CD8-positive, alpha-beta T cell (primary cell): ENCODE measurements at regions of chr12 and their contacts with region 1.

Region 1: GRCh38 chr12:67943226-67943892 is 45.9 kb upstream of the IFNG-AS1 start:
- DNase-seq: peak; percentile 30 to 80 (median 69)
- ATAC-seq: peak; percentile 78
- H3K4me3 ChIP-seq: no peak overlapping the region
- H3K4me3 Mint-ChIP-seq: no peak overlapping the region
- H3K27ac ChIP-seq: no peak overlapping the region
- H3K27ac Mint-ChIP-seq: no peak overlapping the region
- H3K4me1 ChIP-seq: no peaks in the 10 kb centered on the region
- H3K4me1 Mint-ChIP-seq: peaks cover 7% of the 10 kb centered on the region
- H3K27me3 ChIP-seq: no peaks in the 10 kb centered on the region
- H3K27me3 Mint-ChIP-seq: peaks cover 6% of the 10 kb centered on the region
- CTCF ChIP-seq: peak; percentile 83

Region 2: GRCh38 chr12:67025543-67026114 is 917.7 kb before region 1 on chr12:
- CTCF ChIA-PET with region 1: interaction called, 3 read pairs
- POLR2A ChIA-PET with region 1: no interaction called
- intact Hi-C with region 1: loop called in 1 of 2 experiments (anchors 10 kb)
- DNase-seq: peak in 8 of 9 experiments; percentile 9 to 61 (median 43)
- ATAC-seq: peak; percentile 52
- H3K4me3 ChIP-seq: no peak overlapping the region
- H3K4me3 Mint-ChIP-seq: no peak overlapping the region
- H3K27ac ChIP-seq: no peak overlapping the region
- H3K27ac Mint-ChIP-seq: no peak overlapping the region
- H3K4me1 ChIP-seq: no peaks in the 10 kb centered on the region
- H3K4me1 Mint-ChIP-seq: peaks cover 2% of the 10 kb centered on the region
- H3K27me3 ChIP-seq: no peaks in the 10 kb centered on the region
- H3K27me3 Mint-ChIP-seq: peaks cover 12% of the 10 kb centered on the region
- CTCF ChIP-seq: peak; percentile 69

Region 3: GRCh38 chr12:67161322-67161918 is 781.9 kb before region 1 on chr12:
- CTCF ChIA-PET with region 1: no interaction called
- POLR2A ChIA-PET with region 1: no interaction called
- intact Hi-C with region 1: loop called (anchors 2 to 5 kb)
- DNase-seq: peak; percentile 3 to 54 (median 28)
- ATAC-seq: peak; percentile 29
- H3K4me3 ChIP-seq: no peak overlapping the region
- H3K4me3 Mint-ChIP-seq: no peak overlapping the region
- H3K27ac ChIP-seq: no peak overlapping the region
- H3K27ac Mint-ChIP-seq: no peak overlapping the region
- H3K4me1 ChIP-seq: no peaks in the 10 kb centered on the region
- H3K4me1 Mint-ChIP-seq: no peaks in the 10 kb centered on the region
- H3K27me3 ChIP-seq: no peaks in the 10 kb centered on the region
- H3K27me3 Mint-ChIP-seq: peaks cover 5% of the 10 kb centered on the region
- CTCF ChIP-seq: peak; percentile 53

Region 4: GRCh38 chr12:68018315-68018714 is 75.0 kb after region 1 on chr12:
- CTCF ChIA-PET with region 1: no interaction called
- POLR2A ChIA-PET with region 1: no interaction called
- intact Hi-C with region 1: no loop called
- DNase-seq: no peak
- ATAC-seq: no peak
- H3K4me3 ChIP-seq: no peak overlapping the region
- H3K4me3 Mint-ChIP-seq: no peak overlapping the region
- H3K27ac ChIP-seq: no peak overlapping the region
- H3K27ac Mint-ChIP-seq: peak overlapping the region; percentile 30
- H3K4me1 ChIP-seq: no peaks in the 10 kb centered on the region
- H3K4me1 Mint-ChIP-seq: peaks cover 5% of the 10 kb centered on the region
- H3K27me3 ChIP-seq: no peaks in the 10 kb centered on the region
- H3K27me3 Mint-ChIP-seq: no peaks in the 10 kb centered on the region
- CTCF ChIP-seq: no peak